ENCODE measurements at regions of chr16 and their contacts with region 1.

Region 1: GRCh38 chr16:85369741-85370528 is 243.2 kb upstream of the GSE1 start:
- DNase-seq: no peak
- H3K4me3 ChIP-seq: no peak overlapping the region
- CTCF ChIP-seq: peak; percentile 86

Region 2: DNA sequence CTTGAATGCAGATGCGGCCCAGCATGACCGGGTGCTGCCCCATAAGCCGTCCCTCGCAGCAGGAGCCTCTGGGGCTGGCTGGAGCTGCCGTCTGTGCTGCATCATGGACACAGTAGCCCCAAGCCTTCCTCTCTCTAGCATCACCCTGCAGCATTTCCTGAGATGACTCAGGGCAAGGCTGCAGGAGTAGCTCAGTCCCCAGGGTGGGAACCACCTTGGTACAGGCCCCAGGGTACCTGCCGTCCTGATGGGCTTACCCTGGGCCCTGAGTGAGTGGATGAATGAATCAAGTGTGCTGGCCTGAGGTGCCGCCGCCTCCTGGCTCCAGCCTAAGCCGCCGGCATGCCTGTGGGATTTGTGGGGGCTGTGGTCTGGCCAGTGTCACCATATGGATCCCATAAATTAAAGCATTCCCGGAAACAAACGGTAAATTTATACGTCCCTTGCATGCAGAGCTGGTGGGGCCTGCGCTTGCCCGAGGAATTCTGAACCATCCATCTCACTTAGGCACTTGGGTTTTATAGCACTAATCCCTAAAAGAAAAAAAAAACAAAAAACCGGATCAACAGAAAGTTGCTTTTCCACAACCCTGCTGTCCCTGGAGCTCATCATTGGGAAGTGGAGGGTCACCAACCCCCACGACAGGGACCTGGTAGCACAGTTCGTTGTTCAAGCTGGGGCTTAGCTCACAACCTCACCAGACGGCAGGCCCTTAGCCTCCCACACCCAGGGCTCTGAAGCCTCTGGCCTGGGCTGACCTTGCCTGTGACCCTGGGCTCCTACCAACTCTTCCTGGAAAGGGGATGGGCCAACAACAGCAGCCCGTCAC is 15.0 kb before region 1 on chr16:
- CTCF ChIA-PET with region 1: interaction called, 18 read pairs
- POLR2A ChIA-PET with region 1: no interaction called
- DNase-seq: peak; percentile 88
- H3K4me3 ChIP-seq: 0 out of 2 replicates have a peak overlapping the region, but pooled peaks have one; percentile 4
- CTCF ChIP-seq: no peak

Region 3: GRCh38 chr16:85381738-85382592 is 12.0 kb after region 1 on chr16:
- CTCF ChIA-PET with region 1: interaction called, 29 read pairs
- POLR2A ChIA-PET with region 1: no interaction called
- DNase-seq: no peak
- H3K4me3 ChIP-seq: no peak overlapping the region
- CTCF ChIP-seq: no peak

Region 4: GRCh38 chr16:85514595-85515318 is 144.8 kb after region 1 on chr16:
- CTCF ChIA-PET with region 1: no interaction called
- POLR2A ChIA-PET with region 1: no interaction called
- DNase-seq: peak; percentile 73
- H3K4me3 ChIP-seq: peak overlapping the region; percentile 23
- CTCF ChIP-seq: no peak